ENCODE measurements at regions of chr1 and their contacts with region 1.

Region 1: DNA sequence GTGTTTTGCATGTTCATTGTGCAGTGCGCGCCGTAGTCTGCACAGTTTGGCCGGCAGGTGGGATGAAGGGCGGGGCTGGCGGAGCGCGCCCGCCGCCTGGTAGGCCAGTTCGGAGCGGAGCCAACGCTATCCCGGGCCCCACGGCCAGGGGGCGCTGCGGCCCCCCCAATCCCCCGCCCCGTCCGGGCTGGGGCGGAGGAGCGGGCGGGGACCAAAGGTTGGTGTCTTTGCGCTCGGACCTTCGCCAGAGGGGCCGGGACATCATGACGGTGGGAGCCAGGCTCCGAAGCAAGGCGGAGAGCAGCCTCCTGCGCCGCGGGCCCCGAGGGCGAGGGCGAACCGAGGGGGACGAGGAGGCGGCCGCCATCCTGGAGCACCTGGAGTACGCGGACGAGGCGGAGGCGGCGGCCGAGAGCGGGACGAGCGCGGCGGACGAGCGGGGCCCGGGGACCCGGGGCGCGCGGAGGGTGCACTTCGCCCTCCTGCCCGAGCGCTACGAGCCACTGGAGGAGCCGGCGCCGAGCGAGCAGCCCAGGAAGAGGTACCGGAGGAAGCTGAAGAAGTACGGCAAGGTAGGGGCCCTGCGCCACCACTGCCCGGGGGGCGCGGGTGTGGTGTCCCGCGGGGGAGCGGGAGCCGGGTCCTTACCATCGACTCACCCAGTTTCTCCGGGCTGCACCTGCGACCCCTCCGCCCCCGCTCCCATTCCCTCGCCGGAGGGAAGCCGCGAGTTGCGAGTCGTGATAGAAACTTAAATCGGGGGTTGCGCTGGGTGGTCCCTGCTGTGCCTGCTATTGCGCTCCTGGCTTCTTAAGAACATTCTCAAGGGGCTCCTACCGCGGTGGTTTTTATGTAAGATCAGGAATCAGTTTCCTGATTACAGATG is at the start of gene C1orf115:
- DNase-seq: peak; percentile 89
- ATAC-seq: peak; percentile 98
- H3K4me3 ChIP-seq: peak within 1 kb of the TSS in 4 of 5 experiments; percentile 47 to 83 (median 70)
- H3K4me3 Mint-ChIP-seq: peak within 1 kb of the TSS; percentile 93
- H3K27ac ChIP-seq: peak within 1 kb of the TSS in 1 of 2 donors; percentile 49
- H3K27ac Mint-ChIP-seq: peak within 1 kb of the TSS; percentile 87
- H3K4me1 ChIP-seq: peaks cover 14 to 19% of the 10 kb centered on the region in 2 donors
- H3K4me1 Mint-ChIP-seq: peaks cover 21% of the 10 kb centered on the region
- H3K27me3 ChIP-seq: peaks cover 0 to 4% (median 0%) of the 10 kb centered on the region in 4 experiments
- H3K27me3 Mint-ChIP-seq: peaks cover 3% of the 10 kb centered on the region
- CTCF ChIP-seq: peak; percentile 99
- total RNA-seq, gene C1orf115: 19.5 and 21.4 TPM in 2 replicates

Region 2: DNA sequence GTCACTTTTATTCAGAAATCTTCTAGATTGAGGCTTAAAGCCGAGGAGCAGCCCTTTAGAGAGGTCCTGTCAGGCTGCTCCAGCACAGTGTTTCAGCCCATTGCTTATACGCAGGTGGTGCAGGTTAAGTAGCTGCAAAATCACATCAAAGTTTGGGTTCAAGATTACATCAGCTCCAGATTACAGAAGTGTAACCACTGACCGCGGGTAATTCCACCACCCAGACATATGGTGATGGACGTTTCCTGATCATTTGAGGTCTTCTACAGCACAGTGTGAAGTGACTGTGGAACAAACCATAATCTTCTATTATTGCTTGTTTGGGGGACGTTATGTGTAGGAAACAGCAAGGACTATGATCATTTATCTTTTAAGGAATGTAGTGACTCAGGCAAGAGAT is 11.6 kb after region 1 on chr1:
- CTCF ChIA-PET with region 1: interaction called, 10 read pairs
- POLR2A ChIA-PET with region 1: no interaction called
- intact Hi-C with region 1: no loop called
- DNase-seq: no peak
- ATAC-seq: peak; percentile 28
- H3K4me3 ChIP-seq: no peak overlapping the region
- H3K4me3 Mint-ChIP-seq: no peak overlapping the region
- H3K27ac ChIP-seq: no peak overlapping the region
- H3K27ac Mint-ChIP-seq: no peak overlapping the region
- H3K4me1 ChIP-seq: peaks cover 0 to 4% of the 10 kb centered on the region in 2 donors
- H3K4me1 Mint-ChIP-seq: peaks cover 10% of the 10 kb centered on the region
- H3K27me3 ChIP-seq: no peaks in the 10 kb centered on the region
- H3K27me3 Mint-ChIP-seq: no peaks in the 10 kb centered on the region
- CTCF ChIP-seq: no peak

Region 3: DNA sequence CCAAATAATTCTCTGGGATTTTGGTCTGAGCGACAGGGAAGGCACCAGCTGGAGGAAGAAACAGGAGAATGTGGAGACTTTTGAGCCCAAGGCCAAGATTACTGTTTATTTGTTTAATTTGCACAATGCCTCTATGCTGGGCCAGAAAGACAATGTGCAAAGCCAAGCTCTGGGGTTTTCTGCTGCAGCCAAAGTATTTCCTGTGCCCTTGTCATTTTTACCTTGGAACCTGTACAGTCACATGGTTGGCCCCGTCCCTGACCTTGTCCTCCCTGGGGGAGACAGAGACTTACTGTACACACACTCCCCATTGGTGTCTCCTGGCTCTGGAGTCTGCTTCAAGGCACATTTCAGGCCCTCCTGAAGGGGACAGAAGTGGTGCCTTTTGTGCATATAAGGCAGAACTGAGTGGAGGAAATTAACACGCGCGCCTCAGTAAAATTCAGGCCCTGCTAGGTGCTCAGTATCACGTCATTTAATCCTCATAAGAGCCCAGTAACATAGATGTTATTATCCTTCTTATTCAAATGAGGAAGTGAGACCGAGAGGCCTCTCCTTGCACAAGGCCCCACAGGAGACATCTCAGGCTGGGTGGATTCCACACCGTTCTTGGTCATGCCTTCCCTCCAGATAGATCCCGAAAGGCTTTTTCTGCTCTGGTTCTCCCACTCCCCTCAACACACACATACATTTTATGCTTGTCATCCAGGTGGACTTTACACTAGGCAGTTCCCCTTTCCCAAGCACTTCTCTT is 20.9 kb after region 1 on chr1:
- CTCF ChIA-PET with region 1: interaction called, 7 read pairs
- POLR2A ChIA-PET with region 1: no interaction called
- intact Hi-C with region 1: loop called (anchors 1 kb)
- DNase-seq: peak; percentile 61
- ATAC-seq: peak; percentile 86
- H3K4me3 ChIP-seq: no peak overlapping the region
- H3K4me3 Mint-ChIP-seq: peak overlapping the region; percentile 74
- H3K27ac ChIP-seq: peak overlapping the region in 1 of 2 donors; percentile 16
- H3K27ac Mint-ChIP-seq: peak overlapping the region; percentile 87
- H3K4me1 ChIP-seq: peaks cover 32 to 38% of the 10 kb centered on the region in 2 donors
- H3K4me1 Mint-ChIP-seq: peaks cover 41% of the 10 kb centered on the region
- H3K27me3 ChIP-seq: no peaks in the 10 kb centered on the region
- H3K27me3 Mint-ChIP-seq: no peaks in the 10 kb centered on the region
- CTCF ChIP-seq: no peak

Measured in B cell (primary cell).